AG04449 (cell line): ENCODE measurements at regions of chr2 and their contacts with region 1.

Region 1: GRCh38 chr2:183248866-183249567 is 124.8 kb downstream of the NUP35 start:
- DNase-seq: no peak
- H3K4me3 ChIP-seq: no peak overlapping the region
- CTCF ChIP-seq: peak; percentile 28

Region 2: DNA sequence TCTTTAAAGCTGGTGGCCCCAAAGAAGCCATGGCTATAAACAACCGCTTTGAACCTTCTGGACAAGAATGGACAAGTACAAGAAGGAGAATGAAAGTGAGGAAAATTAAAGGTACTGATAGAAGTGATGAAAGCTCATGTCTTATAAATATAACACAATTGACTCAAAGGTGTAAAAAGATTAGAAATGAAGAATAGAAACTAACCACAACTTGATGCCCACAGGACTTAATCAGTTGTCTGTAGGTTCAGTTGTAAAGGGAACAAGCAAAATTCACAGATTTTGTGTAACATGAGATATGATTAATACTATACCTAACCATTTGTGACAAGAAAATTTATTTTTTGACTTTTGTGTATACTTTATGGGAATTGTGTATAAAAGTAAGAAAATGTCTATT is 10.9 kb after region 1 on chr2:
- CTCF ChIA-PET with region 1: interaction called, 14 read pairs
- POLR2A ChIA-PET with region 1: no interaction called
- DNase-seq: no peak
- H3K4me3 ChIP-seq: no peak overlapping the region
- CTCF ChIP-seq: no peak

Region 3: DNA sequence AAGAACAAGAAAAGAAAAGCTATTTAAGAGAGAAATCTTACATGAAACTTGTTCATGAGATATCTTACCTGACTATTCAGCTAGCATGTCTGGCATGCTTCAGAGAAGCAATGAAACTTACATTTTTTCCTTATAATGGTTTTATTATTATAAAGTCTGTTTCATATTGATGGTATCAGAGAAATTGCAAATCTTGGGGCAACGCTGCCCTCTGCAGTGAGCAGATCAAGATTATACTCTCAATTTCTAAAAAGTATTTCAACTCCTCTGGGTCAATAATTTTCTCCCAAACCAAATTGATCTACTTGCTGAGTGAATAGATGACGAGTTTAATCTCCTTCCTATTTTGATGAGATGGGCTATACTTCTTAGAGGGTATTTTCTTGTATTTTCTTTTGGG is 110.8 kb after region 1 on chr2:
- CTCF ChIA-PET with region 1: interaction called, 61 read pairs
- POLR2A ChIA-PET with region 1: no interaction called
- DNase-seq: no peak
- H3K4me3 ChIP-seq: no peak overlapping the region
- CTCF ChIP-seq: no peak